IMR-90 (cell line): ENCODE measurements at regions of chr11 and their contacts with region 1.

Region 1: GRCh38 chr11:35237860-35238715 is 99.1 kb downstream of the CD44 start:
- DNase-seq: no peak
- ATAC-seq: no peak
- H3K4me3 ChIP-seq: no peak overlapping the region
- H3K27ac ChIP-seq: peak overlapping the region; percentile 17; the same call in 1 of the 2 replicates
- H3K4me1 ChIP-seq: peaks cover 7% of the 10 kb centered on the region
- H3K27me3 ChIP-seq: no peaks in the 10 kb centered on the region
- CTCF ChIP-seq: peak; percentile 39
- POLR2A ChIP-seq: no peak
- RAD21 ChIP-seq: peak; percentile 42

Region 2: GRCh38 chr11:35367491-35367890 is 129.4 kb after region 1 on chr11:
- CTCF ChIA-PET with region 1: no interaction called
- POLR2A ChIA-PET with region 1: no interaction called
- dilution Hi-C with region 1: no loop called
- in situ Hi-C with region 1: no loop called
- intact Hi-C with region 1: loop called (anchors 5 kb)
- DNase-seq: peak; percentile 92
- ATAC-seq: peak; percentile 76
- H3K4me3 ChIP-seq: no peak overlapping the region
- H3K27ac ChIP-seq: peak overlapping the region; percentile 52; the same call in 1 of the 2 replicates
- H3K4me1 ChIP-seq: peaks cover 22% of the 10 kb centered on the region
- H3K27me3 ChIP-seq: no peaks in the 10 kb centered on the region
- CTCF ChIP-seq: no peak
- POLR2A ChIP-seq: no peak
- RAD21 ChIP-seq: no peak

Region 3: GRCh38 chr11:35485656-35486322 is 247.7 kb after region 1 on chr11:
- CTCF ChIA-PET with region 1: interaction called, 3 read pairs
- POLR2A ChIA-PET with region 1: no interaction called
- dilution Hi-C with region 1: no loop called
- in situ Hi-C with region 1: no loop called
- intact Hi-C with region 1: loop called (anchors 10 kb)
- DNase-seq: peak; percentile 79
- ATAC-seq: peak; percentile 81
- H3K4me3 ChIP-seq: no peak overlapping the region
- H3K27ac ChIP-seq: no peak overlapping the region
- H3K4me1 ChIP-seq: peaks cover 17% of the 10 kb centered on the region
- H3K27me3 ChIP-seq: no peaks in the 10 kb centered on the region
- CTCF ChIP-seq: peak; percentile 90
- POLR2A ChIP-seq: no peak
- RAD21 ChIP-seq: peak; percentile 84